ENCODE measurements at regions of chr18 and their contacts with region 1.

Region 1: DNA sequence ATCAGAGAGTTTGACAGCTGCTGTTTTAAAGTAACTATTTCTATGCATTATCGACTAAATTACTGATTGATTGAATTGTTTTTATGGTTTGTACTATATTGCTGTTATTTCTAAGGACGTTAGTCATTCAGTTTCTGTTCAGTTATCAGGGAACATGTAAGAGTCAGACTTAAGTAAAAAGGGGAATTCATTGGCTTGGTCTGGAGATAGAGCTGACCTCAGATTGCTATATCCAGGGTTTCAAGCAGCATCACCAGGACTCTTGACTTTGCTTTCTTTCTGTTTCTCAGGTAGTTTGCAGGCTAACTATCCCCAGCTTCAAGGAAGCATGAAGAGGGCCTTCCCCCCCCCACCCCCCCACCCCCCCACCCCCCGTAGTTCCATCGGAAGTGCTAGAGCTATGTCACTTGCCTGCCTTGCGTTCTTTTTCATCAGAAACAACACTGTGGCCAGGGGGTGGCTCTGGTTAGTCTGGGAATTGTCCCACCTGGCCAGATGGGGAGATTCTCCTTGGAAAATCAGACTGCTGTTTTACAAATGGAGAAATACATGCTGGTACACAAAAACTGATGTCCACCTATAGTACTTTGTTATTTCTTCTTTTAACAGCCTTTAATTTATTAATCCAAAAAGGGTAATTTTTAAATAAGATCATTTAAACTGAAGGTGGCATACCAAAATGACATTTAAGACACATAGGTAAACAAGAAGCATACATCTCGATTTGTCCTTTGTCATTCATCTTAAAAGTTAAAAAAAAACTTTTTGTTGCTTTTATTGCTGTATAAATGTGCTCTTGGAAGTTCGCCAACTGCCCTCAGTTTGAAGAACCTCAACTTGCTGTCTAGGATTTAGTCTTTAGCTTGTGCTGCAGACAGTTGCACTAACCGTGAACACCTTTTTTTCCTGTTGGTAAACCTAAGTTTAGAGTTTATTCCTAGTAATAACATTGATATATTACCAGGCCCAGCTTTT is 9.4 kb downstream of the SMAD4 start:
- ATAC-seq: no peak
- H3K4me3 ChIP-seq: no peak overlapping the region
- H3K27ac ChIP-seq: no peak overlapping the region
- H3K4me1 ChIP-seq: no peaks in the 10 kb centered on the region

Region 2: GRCh38 chr18:50819728-50820378 is 219.6 kb before region 1 on chr18 and contains the start of gene MRO:
- in situ Hi-C with region 1: loop called in 4 of 9 experiments (anchors 10 to 25 kb)
- ATAC-seq: peak; percentile 70 to 100 (median 99)
- H3K4me3 ChIP-seq: peak within 1 kb of the TSS in 4 of 5 donors; percentile 7 to 16 (median 12)
- H3K27ac ChIP-seq: no peak within 1 kb of the TSS
- H3K4me1 ChIP-seq: peaks cover 8 to 10% of the 10 kb centered on the region in 2 donors
- total RNA-seq, gene MRO: 0.09 to 1.00 (median 0.28) TPM

Region 3: GRCh38 chr18:51361130-51361860 is 321.9 kb after region 1 on chr18:
- in situ Hi-C with region 1: no loop called
- ATAC-seq: peak in 1 of 8 experiments; percentile 88
- H3K4me3 ChIP-seq: no peak overlapping the region
- H3K27ac ChIP-seq: no peak overlapping the region
- H3K4me1 ChIP-seq: no peaks in the 10 kb centered on the region

Region 4: DNA sequence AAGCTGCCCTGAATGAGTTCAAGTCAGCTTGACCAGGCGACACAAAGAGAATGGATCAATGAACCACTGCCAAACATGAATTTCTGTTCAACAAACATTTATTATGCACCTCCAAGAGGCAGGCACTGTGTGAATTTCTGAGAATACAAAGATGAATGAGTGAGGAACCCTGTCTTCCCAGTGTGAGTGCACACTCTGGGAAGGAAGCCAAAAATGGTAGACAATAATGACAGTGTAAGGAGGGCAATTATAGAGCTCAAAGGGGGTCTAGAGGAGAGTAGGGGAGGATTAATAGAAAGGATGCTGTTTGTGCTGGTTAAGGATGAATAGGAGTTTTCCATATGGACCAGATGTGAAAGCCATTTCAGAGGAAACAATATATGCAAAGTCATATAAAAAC is 1514.0 kb after region 1 on chr18:
- in situ Hi-C with region 1: no loop called
- ATAC-seq: peak in 1 of 8 experiments; percentile 20
- H3K4me3 ChIP-seq: no peak overlapping the region
- H3K27ac ChIP-seq: no peak overlapping the region
- H3K4me1 ChIP-seq: no peaks in the 10 kb centered on the region

Measured in motor neuron (in vitro differentiated cells).